Activated T-helper 1 cell treated with anti-CD3 and anti-CD28 coated beads, Interleukin-12 subunit alpha, Interleukin-12 subunit beta, Interleukin-2, Interleukin-4 antibody, amounts not matched to agents 30 ng/mL and 10 ng/mL and 1 ng/mL, durations not matched to agents 14 hours and 24 hours and 36 hours (primary cell): ENCODE measurements at regions of chr19 and their contacts with region 1.

Region 1: DNA sequence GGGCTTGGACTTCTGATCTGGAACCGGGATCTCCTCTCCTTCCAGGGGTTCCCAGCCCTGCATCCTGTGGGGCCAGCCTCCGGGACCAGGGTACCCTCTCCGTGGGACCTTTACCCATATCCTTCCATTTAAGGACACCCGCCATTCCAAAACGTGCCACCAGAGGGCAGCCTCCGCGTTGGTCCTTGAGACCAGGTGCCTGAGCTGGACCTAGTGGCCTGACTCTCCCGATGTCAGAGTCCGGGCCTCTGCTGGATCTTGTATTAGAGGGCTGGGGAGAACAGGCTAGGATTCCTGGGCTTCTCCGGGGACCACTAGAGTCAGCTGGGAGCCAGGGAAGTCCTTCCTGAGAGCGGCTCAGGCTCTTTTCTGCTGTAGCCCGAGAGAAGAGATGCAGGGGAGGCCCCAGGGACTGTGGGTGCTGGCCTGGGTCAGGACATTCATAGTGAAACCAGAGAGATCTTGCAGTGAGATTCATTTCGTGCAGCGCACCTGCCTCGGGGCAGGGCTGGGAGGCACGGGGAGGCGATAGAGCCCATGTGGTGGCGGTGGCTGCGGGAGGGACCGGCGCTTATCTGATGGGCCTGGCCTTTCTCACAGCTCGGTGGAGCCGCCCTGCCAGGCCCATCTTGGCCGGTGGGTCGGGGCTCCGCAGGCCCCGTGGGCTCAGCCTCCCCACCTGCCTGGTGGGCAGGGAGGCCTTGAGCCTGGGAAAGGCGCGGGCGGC is 9.8 kb upstream of the SLC7A10 start:
- DNase-seq: peak; percentile 58
- H3K4me3 Mint-ChIP-seq: no peak overlapping the region
- H3K27ac Mint-ChIP-seq: no peak overlapping the region
- H3K4me1 Mint-ChIP-seq: no peaks in the 10 kb centered on the region
- H3K27me3 Mint-ChIP-seq: peaks cover 2% of the 10 kb centered on the region

Region 2: DNA sequence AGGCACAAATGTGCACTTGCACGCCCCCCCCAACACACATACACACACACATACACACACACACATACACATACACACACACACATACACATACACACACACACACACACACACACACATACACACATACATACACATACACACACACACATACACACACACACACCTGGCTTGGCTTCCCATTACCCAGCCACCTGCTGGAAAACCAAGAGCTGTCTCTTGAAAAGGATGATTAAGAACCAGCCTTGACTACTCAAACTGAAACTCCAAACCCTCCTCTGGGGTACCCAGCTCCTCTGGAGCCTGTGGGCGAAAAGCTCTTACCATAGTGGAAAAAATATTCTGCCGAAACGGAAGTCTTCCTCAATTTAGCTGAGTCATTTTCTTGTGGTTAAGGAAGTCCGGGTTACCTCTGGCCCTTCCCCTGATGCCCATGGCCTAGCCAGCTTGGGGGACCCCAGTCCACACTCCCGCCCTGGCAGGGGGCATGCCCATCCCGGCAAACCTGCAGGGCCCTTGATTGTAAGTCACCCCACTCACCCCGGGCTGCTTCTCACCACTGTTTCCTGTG is 45.0 kb after region 1 on chr19:
- intact Hi-C with region 1: loop called (anchors 5 kb)
- DNase-seq: peak; percentile 47
- H3K4me3 Mint-ChIP-seq: peak overlapping the region; percentile 34
- H3K27ac Mint-ChIP-seq: peak overlapping the region; percentile 86
- H3K4me1 Mint-ChIP-seq: peaks cover 20% of the 10 kb centered on the region
- H3K27me3 Mint-ChIP-seq: peaks cover 6% of the 10 kb centered on the region

Region 3: GRCh38 chr19:33311326-33311682 is 75.9 kb after region 1 on chr19:
- intact Hi-C with region 1: loop called (anchors 1 kb)
- DNase-seq: no peak
- H3K4me3 Mint-ChIP-seq: no peak overlapping the region
- H3K27ac Mint-ChIP-seq: no peak overlapping the region
- H3K4me1 Mint-ChIP-seq: no peaks in the 10 kb centered on the region
- H3K27me3 Mint-ChIP-seq: peaks cover 13% of the 10 kb centered on the region

Region 4: GRCh38 chr19:33406521-33407139 is 171.2 kb after region 1 on chr19:
- intact Hi-C with region 1: loop called (anchors 1 kb)
- DNase-seq: peak; percentile 54
- H3K4me3 Mint-ChIP-seq: no peak overlapping the region
- H3K27ac Mint-ChIP-seq: no peak overlapping the region
- H3K4me1 Mint-ChIP-seq: peaks cover 4% of the 10 kb centered on the region
- H3K27me3 Mint-ChIP-seq: no peaks in the 10 kb centered on the region